ENCODE measurements at regions of chr1 and their contacts with region 1.

Region 1: GRCh38 chr1:39919545-39919944 is 17.8 kb upstream of the MYCL start:
- DNase-seq: peak in 8 of 9 donors; percentile 48 to 76 (median 67)
- ATAC-seq: peak; percentile 93
- H3K4me3 ChIP-seq: no peak overlapping the region
- H3K4me3 Mint-ChIP-seq: no peak overlapping the region
- H3K27ac ChIP-seq: no peak overlapping the region
- H3K27ac Mint-ChIP-seq: no peak overlapping the region
- H3K4me1 ChIP-seq: no peaks in the 10 kb centered on the region
- H3K4me1 Mint-ChIP-seq: peaks cover 0 to 4% (median 0%) of the 10 kb centered on the region in 7 donors
- H3K27me3 ChIP-seq: no peaks in the 10 kb centered on the region
- H3K27me3 Mint-ChIP-seq: peaks cover 0 to 8% (median 4%) of the 10 kb centered on the region in 5 donors

Region 2: DNA sequence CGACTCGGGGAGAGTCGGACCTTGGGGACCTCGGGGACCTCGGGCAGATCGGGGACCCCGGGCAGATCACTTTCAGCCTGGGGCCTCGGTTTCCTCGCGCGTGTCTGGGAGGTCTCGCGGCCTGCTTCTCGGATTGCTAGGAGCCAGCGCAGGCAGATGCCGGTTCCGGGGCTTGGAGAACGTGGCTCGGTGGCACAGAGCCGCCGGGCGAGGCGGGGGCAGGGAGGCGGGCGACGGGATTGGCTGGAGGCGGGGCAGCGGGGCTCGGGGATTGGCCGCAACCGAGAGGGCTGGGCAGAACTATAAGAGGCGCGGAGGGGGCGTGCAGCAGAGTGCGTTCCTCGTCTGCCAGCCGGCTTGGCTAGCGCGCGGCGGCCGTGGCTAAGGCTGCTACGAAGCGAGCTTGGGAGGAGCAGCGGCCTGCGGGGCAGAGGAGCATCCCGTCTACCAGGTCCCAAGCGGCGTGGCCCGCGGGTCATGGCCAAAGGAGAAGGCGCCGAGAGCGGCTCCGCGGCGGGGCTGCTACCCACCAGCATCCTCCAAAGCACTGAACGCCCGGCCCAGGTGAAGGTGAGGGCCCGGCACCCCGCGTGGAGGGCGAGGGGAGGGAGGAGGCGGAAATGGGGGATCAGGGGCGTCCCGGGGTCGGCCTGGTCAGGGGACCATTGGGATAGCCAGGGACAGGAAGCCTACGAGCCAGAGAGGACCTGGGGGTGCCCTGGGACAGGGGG is 35.4 kb after region 1 on chr1 and contains the start of gene MFSD2A:
- CTCF ChIA-PET with region 1: interaction called, 3 read pairs
- POLR2A ChIA-PET with region 1: no interaction called
- intact Hi-C with region 1: loop called in 1 of 2 experiments (anchors 1 kb)
- DNase-seq: peak; percentile 80 to 92 (median 86)
- ATAC-seq: peak; percentile 98
- H3K4me3 ChIP-seq: peak within 1 kb of the TSS; percentile 84
- H3K4me3 Mint-ChIP-seq: peak within 1 kb of the TSS; percentile 89 to 97 (median 94)
- H3K27ac ChIP-seq: peak within 1 kb of the TSS; percentile 28
- H3K27ac Mint-ChIP-seq: peak within 1 kb of the TSS in 8 of 9 donors; percentile 51 to 95 (median 78)
- H3K4me1 ChIP-seq: peaks cover 7 to 18% of the 10 kb centered on the region in 2 donors
- H3K4me1 Mint-ChIP-seq: peaks cover 16 to 25% (median 20%) of the 10 kb centered on the region in 7 donors
- H3K27me3 ChIP-seq: no peaks in the 10 kb centered on the region
- H3K27me3 Mint-ChIP-seq: peaks cover 0 to 7% (median 0%) of the 10 kb centered on the region in 5 donors
- total RNA-seq, gene MFSD2A: 0.70 to 8.7 (median 4.4) TPM

Region 3: GRCh38 chr1:40132383-40133311 is 213.1 kb after region 1 on chr1:
- CTCF ChIA-PET with region 1: no interaction called
- POLR2A ChIA-PET with region 1: no interaction called
- intact Hi-C with region 1: no loop called
- DNase-seq: no peak
- ATAC-seq: no peak
- H3K4me3 ChIP-seq: no peak overlapping the region
- H3K4me3 Mint-ChIP-seq: no peak overlapping the region
- H3K27ac ChIP-seq: no peak overlapping the region
- H3K27ac Mint-ChIP-seq: no peak overlapping the region
- H3K4me1 ChIP-seq: no peaks in the 10 kb centered on the region
- H3K4me1 Mint-ChIP-seq: peaks cover 0 to 3% (median 0%) of the 10 kb centered on the region in 7 donors
- H3K27me3 ChIP-seq: no peaks in the 10 kb centered on the region
- H3K27me3 Mint-ChIP-seq: peaks cover 0 to 23% (median 18%) of the 10 kb centered on the region in 5 donors

Measured in naive thymus-derived CD4-positive, alpha-beta T cell (primary cell).